GM13976 (cell line): ENCODE measurements at regions of chr20 and their contacts with region 1.

Region 1: GRCh38 chr20:11274141-11274594 is 600.4 kb upstream of the JAG1 start:
- DNase-seq: peak; percentile 63
- CTCF ChIP-seq: peak; percentile 9

Region 2: GRCh38 chr20:10553326-10553984 is 720.7 kb before region 1 on chr20:
- in situ Hi-C with region 1: loop called (anchors 25 kb)
- DNase-seq: peak; percentile 28
- CTCF ChIP-seq: peak; percentile 73

Region 3: GRCh38 chr20:11591965-11592364 is 317.8 kb after region 1 on chr20:
- in situ Hi-C with region 1: no loop called
- DNase-seq: no peak
- CTCF ChIP-seq: no peak